Activated T-helper 1 cell treated with anti-CD3 and anti-CD28 coated beads, Interleukin-12 subunit alpha, Interleukin-12 subunit beta, Interleukin-2, Interleukin-4 antibody, amounts not matched to agents 30 ng/mL and 10 ng/mL and 1 ng/mL, durations not matched to agents 14 hours and 24 hours and 36 hours (primary cell): ENCODE measurements at regions of chr13 and their contacts with region 1.

Region 1: GRCh38 chr13:33610471-33611015 is 207.4 kb upstream of the RFC3 start:
- DNase-seq: peak; percentile 8
- H3K4me3 Mint-ChIP-seq: peak overlapping the region; percentile 82
- H3K27ac Mint-ChIP-seq: peak overlapping the region; percentile 95
- H3K4me1 Mint-ChIP-seq: peaks cover 46% of the 10 kb centered on the region
- H3K27me3 Mint-ChIP-seq: no peaks in the 10 kb centered on the region

Region 2: GRCh38 chr13:33146843-33147611 is 463.5 kb before region 1 on chr13:
- intact Hi-C with region 1: loop called (anchors 5 kb)
- DNase-seq: peak; percentile 25
- H3K4me3 Mint-ChIP-seq: peak overlapping the region; percentile 20
- H3K27ac Mint-ChIP-seq: peak overlapping the region; percentile 81
- H3K4me1 Mint-ChIP-seq: peaks cover 41% of the 10 kb centered on the region
- H3K27me3 Mint-ChIP-seq: no peaks in the 10 kb centered on the region

Region 3: GRCh38 chr13:33554919-33555791 is 55.4 kb before region 1 on chr13:
- intact Hi-C with region 1: loop called (anchors 2 kb)
- DNase-seq: no peak
- H3K4me3 Mint-ChIP-seq: no peak overlapping the region
- H3K27ac Mint-ChIP-seq: peak overlapping the region; percentile 7
- H3K4me1 Mint-ChIP-seq: peaks cover 27% of the 10 kb centered on the region
- H3K27me3 Mint-ChIP-seq: no peaks in the 10 kb centered on the region

Region 4: GRCh38 chr13:33678906-33679657 is 68.5 kb after region 1 on chr13:
- intact Hi-C with region 1: loop called (anchors 1 kb)
- DNase-seq: peak; percentile 71
- H3K4me3 Mint-ChIP-seq: peak overlapping the region; percentile 73
- H3K27ac Mint-ChIP-seq: peak overlapping the region; percentile 91
- H3K4me1 Mint-ChIP-seq: peaks cover 36% of the 10 kb centered on the region
- H3K27me3 Mint-ChIP-seq: peaks cover 2% of the 10 kb centered on the region

Region 5: DNA sequence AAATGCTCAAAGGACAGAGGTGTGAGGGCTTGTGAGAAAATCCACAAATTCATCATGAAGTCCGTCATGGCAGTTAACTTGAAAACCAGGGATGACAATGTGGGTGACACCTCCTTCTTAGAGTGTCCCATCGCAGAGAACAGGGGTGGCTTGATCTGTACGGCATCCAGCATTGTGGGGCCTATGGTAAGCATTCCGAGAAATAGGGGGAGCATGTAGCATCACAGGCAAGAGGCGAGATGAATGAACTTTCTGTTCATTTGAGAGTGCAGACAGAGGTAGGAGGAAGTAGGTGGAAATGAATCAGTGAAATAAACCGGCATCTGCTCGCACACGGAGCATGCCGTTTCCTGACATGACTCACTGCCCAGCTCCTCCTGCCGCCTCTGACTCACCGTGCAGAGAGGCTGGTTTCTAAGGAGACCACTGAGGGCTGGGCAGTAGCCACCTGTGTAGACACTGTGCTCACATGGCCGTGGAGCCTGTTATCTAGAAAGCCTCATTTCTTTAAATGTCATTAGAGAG is 546.4 kb after region 1 on chr13:
- intact Hi-C with region 1: loop called (anchors 1 kb)
- DNase-seq: peak; percentile 59
- H3K4me3 Mint-ChIP-seq: peak overlapping the region; percentile 68
- H3K27ac Mint-ChIP-seq: peak overlapping the region; percentile 91
- H3K4me1 Mint-ChIP-seq: peaks cover 37% of the 10 kb centered on the region
- H3K27me3 Mint-ChIP-seq: peaks cover 3% of the 10 kb centered on the region